ENCODE measurements at regions of chr3 and their contacts with region 1.

Region 1: GRCh38 chr3:150763122-150763841 is at the start of gene SIAH2:
- DNase-seq: peak; percentile 91
- H3K4me3 Mint-ChIP-seq: peak within 1 kb of the TSS; percentile 100
- H3K27ac Mint-ChIP-seq: peak within 1 kb of the TSS; percentile 100
- H3K4me1 Mint-ChIP-seq: peaks cover 50% of the 10 kb centered on the region
- H3K27me3 Mint-ChIP-seq: no peaks in the 10 kb centered on the region
- total RNA-seq, gene SIAH2: 108 and 116 TPM in 2 replicates

Region 2: GRCh38 chr3:150603153-150603979 is 159.9 kb before region 1 on chr3 and contains the start of gene SELENOT:
- intact Hi-C with region 1: loop called (anchors 1 kb)
- DNase-seq: peak; percentile 95
- H3K4me3 Mint-ChIP-seq: peak within 1 kb of the TSS; percentile 94
- H3K27ac Mint-ChIP-seq: peak within 1 kb of the TSS; percentile 97
- H3K4me1 Mint-ChIP-seq: peaks cover 56% of the 10 kb centered on the region
- H3K27me3 Mint-ChIP-seq: no peaks in the 10 kb centered on the region
- total RNA-seq, gene SELENOT: 119 and 121 TPM in 2 replicates

Region 3: GRCh38 chr3:150721285-150722130 is 41.8 kb before region 1 on chr3:
- intact Hi-C with region 1: loop called (anchors 1 kb)
- DNase-seq: no peak
- H3K4me3 Mint-ChIP-seq: no peak overlapping the region
- H3K27ac Mint-ChIP-seq: no peak overlapping the region
- H3K4me1 Mint-ChIP-seq: peaks cover 36% of the 10 kb centered on the region
- H3K27me3 Mint-ChIP-seq: no peaks in the 10 kb centered on the region

Region 4: DNA sequence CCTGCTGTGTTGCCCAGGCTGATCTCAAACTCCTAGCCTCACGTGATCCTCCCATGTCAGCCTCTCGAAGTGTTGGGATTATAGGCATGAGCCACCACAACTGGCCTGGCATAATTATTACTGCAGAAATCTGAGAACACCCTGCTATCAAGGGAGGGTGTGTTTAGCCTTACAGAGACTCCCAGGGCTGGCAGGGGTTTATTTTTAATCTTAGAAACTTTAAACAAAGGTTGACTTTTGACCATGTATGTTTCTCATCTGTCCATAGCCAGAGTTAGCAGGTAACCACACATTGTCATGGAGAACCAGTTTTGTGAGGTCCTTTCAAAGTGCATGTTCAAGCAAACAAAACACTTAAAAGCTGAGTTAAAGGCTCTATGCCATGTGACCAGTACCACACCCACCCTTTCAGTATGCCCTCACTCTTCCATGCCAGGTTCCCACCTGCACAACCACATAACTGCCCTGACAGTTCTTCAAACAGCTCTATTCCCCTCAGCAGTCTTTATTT is 11.5 kb before region 1 on chr3:
- intact Hi-C with region 1: loop called (anchors 1 kb)
- DNase-seq: no peak
- H3K4me3 Mint-ChIP-seq: no peak overlapping the region
- H3K27ac Mint-ChIP-seq: peak overlapping the region; percentile 79
- H3K4me1 Mint-ChIP-seq: peaks cover 75% of the 10 kb centered on the region
- H3K27me3 Mint-ChIP-seq: no peaks in the 10 kb centered on the region

Region 5: DNA sequence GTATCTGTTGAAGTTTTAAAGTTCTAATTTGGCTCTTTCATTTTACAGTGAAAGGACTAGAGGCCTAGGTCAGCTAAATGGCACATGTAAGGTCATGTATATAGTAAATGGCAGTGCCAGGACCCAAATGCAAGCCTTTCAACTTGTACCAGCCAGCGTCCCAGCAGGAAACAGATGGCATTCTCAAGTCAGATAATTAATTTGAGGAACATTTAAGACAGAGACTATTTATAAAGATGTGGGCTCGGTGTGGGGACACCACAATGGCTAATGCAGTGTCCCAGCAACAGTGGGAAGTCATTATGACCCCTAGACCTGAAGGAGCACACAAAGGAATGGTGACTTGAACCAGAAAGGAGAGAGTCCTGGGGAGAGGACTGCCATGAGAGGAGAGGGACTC is 135.9 kb after region 1 on chr3:
- intact Hi-C with region 1: no loop called
- DNase-seq: no peak
- H3K4me3 Mint-ChIP-seq: no peak overlapping the region
- H3K27ac Mint-ChIP-seq: no peak overlapping the region
- H3K4me1 Mint-ChIP-seq: no peaks in the 10 kb centered on the region
- H3K27me3 Mint-ChIP-seq: peaks cover 36% of the 10 kb centered on the region

Region 6: GRCh38 chr3:151135541-151136337 is 372.5 kb after region 1 on chr3:
- intact Hi-C with region 1: loop called (anchors 2 kb)
- DNase-seq: peak; percentile 48
- H3K4me3 Mint-ChIP-seq: no peak overlapping the region
- H3K27ac Mint-ChIP-seq: peak overlapping the region; percentile 95
- H3K4me1 Mint-ChIP-seq: peaks cover 30% of the 10 kb centered on the region
- H3K27me3 Mint-ChIP-seq: peaks cover 4% of the 10 kb centered on the region